IMR-90 (cell line): ENCODE measurements at regions of chr2 and their contacts with region 1.

Region 1: GRCh38 chr2:75619956-75620740 is 26.4 kb upstream of the MRPL19 start:
- DNase-seq: no peak
- ATAC-seq: peak; percentile 21; the same call in 1 of the 2 replicates
- H3K4me3 ChIP-seq: no peak overlapping the region
- H3K27ac ChIP-seq: no peak overlapping the region
- H3K4me1 ChIP-seq: no peaks in the 10 kb centered on the region
- H3K27me3 ChIP-seq: peaks cover 9% of the 10 kb centered on the region
- CTCF ChIP-seq: no peak
- POLR2A ChIP-seq: no peak
- RAD21 ChIP-seq: no peak

Region 2: DNA sequence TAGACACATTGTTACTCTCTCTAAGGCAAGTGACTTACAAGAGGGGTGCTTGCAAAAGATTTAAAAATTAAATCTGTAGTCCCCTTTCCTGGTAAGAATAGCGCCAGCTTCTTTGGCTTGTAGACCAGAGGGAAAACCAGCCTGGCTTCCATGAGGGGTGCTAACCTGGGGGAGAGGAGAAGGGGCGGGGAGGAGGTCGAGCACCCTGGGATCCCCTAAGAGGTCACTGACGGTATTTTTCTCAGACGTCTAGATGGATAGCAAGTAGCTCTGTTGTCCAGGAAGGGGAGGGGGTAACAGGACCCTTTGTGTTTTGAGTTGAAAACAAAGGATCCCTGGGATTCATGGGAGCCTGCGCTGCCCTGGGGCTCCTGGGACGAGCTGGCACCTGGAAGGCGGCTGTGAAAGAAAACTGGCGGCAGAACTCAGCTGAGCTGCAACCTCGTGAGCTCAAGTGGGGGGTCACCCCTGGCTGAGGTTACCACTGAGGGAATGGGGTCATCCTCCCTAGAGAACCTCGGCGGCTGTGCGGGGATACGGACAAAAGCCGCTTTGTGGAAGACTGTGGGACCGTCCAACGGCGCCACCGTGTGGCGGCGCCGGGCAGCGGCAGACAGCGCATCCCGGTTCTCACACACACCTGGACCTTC is 11.3 kb before region 1 on chr2:
- CTCF ChIA-PET with region 1: interaction called, 13 read pairs
- POLR2A ChIA-PET with region 1: no interaction called
- dilution Hi-C with region 1: no loop called
- in situ Hi-C with region 1: no loop called
- intact Hi-C with region 1: no loop called
- DNase-seq: peak; percentile 47
- ATAC-seq: peak; percentile 67
- H3K4me3 ChIP-seq: peak overlapping the region; percentile 22; the same call in 1 of the 2 replicates
- H3K27ac ChIP-seq: no peak overlapping the region
- H3K4me1 ChIP-seq: peaks cover 13% of the 10 kb centered on the region
- H3K27me3 ChIP-seq: peaks cover 24% of the 10 kb centered on the region
- CTCF ChIP-seq: peak; percentile 89
- POLR2A ChIP-seq: peak; percentile 34; the same call in 1 of the 2 replicates
- RAD21 ChIP-seq: peak; percentile 95